Mammary epithelial cell (primary cell): ENCODE measurements at regions of chr1 and their contacts with region 1.

Region 1: GRCh38 chr1:53393325-53393792 is 65.5 kb upstream of the LRP8 start:
- DNase-seq: peak; percentile 42
- H3K4me3 ChIP-seq: no peak overlapping the region
- H3K27ac ChIP-seq: no peak overlapping the region
- H3K4me1 ChIP-seq: peaks cover 6% of the 10 kb centered on the region
- H3K27me3 ChIP-seq: no peaks in the 10 kb centered on the region
- CTCF ChIP-seq: peak; percentile 76 to 85

Region 2: GRCh38 chr1:53266106-53266505 is 127.3 kb before region 1 on chr1:
- CTCF ChIA-PET with region 1: interaction called, 4 read pairs
- dilution Hi-C with region 1: no loop called
- in situ Hi-C with region 1: no loop called
- intact Hi-C with region 1: loop called (anchors 1 kb)
- DNase-seq: peak; percentile 12
- H3K4me3 ChIP-seq: no peak overlapping the region
- H3K27ac ChIP-seq: no peak overlapping the region
- H3K4me1 ChIP-seq: no peaks in the 10 kb centered on the region
- H3K27me3 ChIP-seq: no peaks in the 10 kb centered on the region
- CTCF ChIP-seq: peak; percentile 23 to 66

Region 3: DNA sequence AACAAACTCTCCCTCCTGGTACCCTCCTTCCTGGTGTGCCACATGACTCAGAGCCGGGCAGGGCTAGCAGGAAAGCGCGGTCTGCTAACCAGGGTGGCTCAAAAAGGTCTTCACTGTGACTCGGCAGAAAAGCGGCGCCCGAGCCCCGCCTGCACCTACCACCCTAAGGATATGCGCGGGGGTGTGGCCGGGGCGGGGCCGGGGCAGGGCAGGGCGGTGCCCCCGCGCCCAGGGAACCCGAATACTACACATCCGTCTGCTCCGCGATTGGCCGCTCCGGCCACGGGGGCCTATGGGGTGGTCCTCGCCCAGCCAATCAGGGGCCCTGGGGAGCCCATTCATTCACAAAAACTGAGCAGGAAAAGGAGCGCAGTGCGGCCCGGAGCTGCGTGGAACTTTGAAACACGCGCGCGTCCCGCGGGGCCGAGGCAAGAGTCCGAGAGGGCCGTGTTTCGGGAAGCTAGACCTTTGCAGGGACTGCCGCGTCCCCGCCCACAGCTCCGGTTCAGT is 67.2 kb before region 1 on chr1:
- CTCF ChIA-PET with region 1: no interaction called
- dilution Hi-C with region 1: no loop called
- in situ Hi-C with region 1: no loop called
- intact Hi-C with region 1: loop called (anchors 1 kb)
- DNase-seq: peak; percentile 97
- H3K4me3 ChIP-seq: peak overlapping the region; percentile 52 to 85 (median 75)
- H3K27ac ChIP-seq: peak overlapping the region; percentile 78
- H3K4me1 ChIP-seq: peaks cover 20% of the 10 kb centered on the region
- H3K27me3 ChIP-seq: no peaks in the 10 kb centered on the region
- CTCF ChIP-seq: no peak

Region 4: GRCh38 chr1:53336146-53336545 is 57.2 kb before region 1 on chr1:
- CTCF ChIA-PET with region 1: no interaction called
- dilution Hi-C with region 1: no loop called
- in situ Hi-C with region 1: no loop called
- intact Hi-C with region 1: no loop called
- DNase-seq: no peak
- H3K4me3 ChIP-seq: no peak overlapping the region
- H3K27ac ChIP-seq: no peak overlapping the region
- H3K4me1 ChIP-seq: no peaks in the 10 kb centered on the region
- H3K27me3 ChIP-seq: no peaks in the 10 kb centered on the region
- CTCF ChIP-seq: no peak

Region 5: GRCh38 chr1:53625049-53625448 is 231.7 kb after region 1 on chr1:
- CTCF ChIA-PET with region 1: no interaction called
- dilution Hi-C with region 1: no loop called
- in situ Hi-C with region 1: no loop called
- intact Hi-C with region 1: no loop called
- DNase-seq: no peak
- H3K4me3 ChIP-seq: no peak overlapping the region
- H3K27ac ChIP-seq: no peak overlapping the region
- H3K4me1 ChIP-seq: no peaks in the 10 kb centered on the region
- H3K27me3 ChIP-seq: no peaks in the 10 kb centered on the region
- CTCF ChIP-seq: no peak